GM12878 (cell line): ENCODE measurements at regions of chr1 and their contacts with region 1.

Region 1: DNA sequence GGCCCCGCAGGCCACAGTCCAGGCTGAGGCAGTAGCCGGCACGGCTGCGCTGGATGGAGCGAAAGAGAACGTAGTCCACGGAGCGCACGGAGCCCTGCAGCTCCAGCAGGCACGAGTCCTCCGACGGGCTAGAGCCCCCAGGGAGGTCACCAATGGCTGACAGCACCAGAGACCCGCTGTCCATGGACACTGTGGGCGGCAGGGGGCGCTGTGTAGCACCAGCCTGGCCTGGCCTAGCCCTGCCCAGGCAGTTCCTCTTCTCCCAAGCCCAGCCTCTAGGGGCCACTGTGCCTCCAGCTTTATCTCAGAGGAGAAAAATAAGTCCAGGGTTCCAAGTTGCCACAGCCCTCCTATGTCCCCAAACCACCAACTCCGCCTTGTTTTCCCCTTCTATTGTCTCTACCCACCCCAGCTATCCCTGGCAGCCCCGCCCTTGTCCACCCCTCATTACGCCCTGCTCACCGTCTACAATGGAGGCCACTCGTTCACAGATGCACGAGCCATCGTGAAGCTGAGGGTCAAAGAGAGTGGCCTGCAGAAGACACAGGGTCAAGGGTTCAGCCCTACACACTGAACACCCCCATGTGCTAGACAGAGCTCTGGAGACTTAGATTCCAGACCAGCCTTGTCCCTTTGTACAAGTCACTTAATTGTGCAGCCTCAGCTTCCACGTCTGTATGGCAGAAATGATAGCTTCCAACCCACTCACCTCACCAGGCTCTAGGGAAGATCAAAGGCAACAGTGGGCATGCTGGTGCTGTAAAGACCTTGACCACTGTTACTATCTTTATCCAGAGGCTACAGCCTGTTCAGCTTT is 4.4 kb downstream of the ENTREP3 start:
- DNase-seq: peak; percentile 57
- ATAC-seq: peak; percentile 97
- H3K4me3 ChIP-seq: peak overlapping the region; percentile 72
- H3K27ac ChIP-seq: peak overlapping the region; percentile 38
- H3K4me1 ChIP-seq: peaks cover 13% of the 10 kb centered on the region
- H3K27me3 ChIP-seq: no peaks in the 10 kb centered on the region
- CTCF ChIP-seq: peak; percentile 100; a peak in 5 of 6 replicates
- EP300 ChIP-seq: no peak
- POLR2A ChIP-seq: peak; percentile 65
- RAD21 ChIP-seq: peak; percentile 89

Region 2: DNA sequence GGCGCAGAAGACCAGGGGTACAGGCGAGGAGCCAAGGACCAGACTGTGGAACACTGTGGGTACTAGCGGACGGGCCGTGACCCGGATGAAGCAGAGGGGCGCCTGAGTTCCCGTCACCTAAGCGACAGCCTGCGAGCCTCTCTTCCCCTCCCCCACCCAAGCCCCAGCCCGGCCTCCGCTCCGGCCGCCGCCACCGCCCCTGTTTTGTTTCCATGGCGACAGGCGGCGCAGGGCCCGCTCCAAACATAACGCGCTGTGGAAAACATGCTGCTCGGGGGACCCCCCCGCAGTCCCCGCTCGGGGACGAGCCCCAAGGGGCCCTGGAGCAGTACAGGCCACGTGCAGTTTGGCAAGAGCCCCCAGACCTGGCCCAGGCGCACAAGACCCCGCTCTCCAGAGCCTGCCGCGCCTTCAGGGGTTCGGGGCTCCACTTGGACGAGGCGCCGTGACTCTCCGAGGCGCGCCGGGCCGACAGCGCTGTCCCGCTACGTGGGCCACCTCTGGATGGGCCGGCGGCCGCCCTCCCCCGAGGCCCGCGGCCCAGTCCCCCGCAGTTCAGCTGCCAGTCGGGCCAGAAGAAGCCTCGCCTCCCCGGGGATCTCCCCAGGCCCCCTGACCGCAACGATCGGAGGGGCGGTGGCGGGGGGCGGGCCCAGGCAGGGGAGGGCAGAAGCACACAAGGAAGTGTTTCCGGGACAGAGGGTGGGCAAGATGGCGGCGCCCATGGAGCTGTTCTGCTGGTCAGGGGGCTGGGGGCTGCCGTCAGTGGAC is 42.1 kb before region 1 on chr1 and contains the start of gene MTX1:
- CTCF ChIA-PET with region 1: interaction called, 28 read pairs
- POLR2A ChIA-PET with region 1: no interaction called
- RAD21 ChIA-PET with region 1: interaction called, 16 read pairs
- SMC1A ChIA-PET with region 1: interaction called, 15 read pairs
- in situ Hi-C with region 1: no loop called
- intact Hi-C with region 1: no loop called
- DNase-seq: no peak
- ATAC-seq: peak; percentile 93
- H3K4me3 ChIP-seq: peak within 1 kb of the TSS; percentile 98
- H3K27ac ChIP-seq: peak within 1 kb of the TSS; percentile 81
- H3K4me1 ChIP-seq: peaks cover 19% of the 10 kb centered on the region
- H3K27me3 ChIP-seq: no peaks in the 10 kb centered on the region
- CTCF ChIP-seq: no peak
- EP300 ChIP-seq: peak in 1 of 2 experiments; percentile 58; a peak in 1 of 4 replicates
- POLR2A ChIP-seq: peak; percentile 92
- RAD21 ChIP-seq: no peak
- polyA plus RNA-seq, gene MTX1: 15.8 to 25.5 TPM

Region 3: GRCh38 chr1:155267373-155267772 is 16.5 kb after region 1 on chr1:
- CTCF ChIA-PET with region 1: interaction called, 80 read pairs
- POLR2A ChIA-PET with region 1: interaction called, 7 read pairs
- RAD21 ChIA-PET with region 1: interaction called, 26 read pairs
- SMC1A ChIA-PET with region 1: interaction called, 17 read pairs
- in situ Hi-C with region 1: no loop called
- intact Hi-C with region 1: no loop called
- DNase-seq: no peak
- ATAC-seq: no peak
- H3K4me3 ChIP-seq: no peak overlapping the region
- H3K27ac ChIP-seq: no peak overlapping the region
- H3K4me1 ChIP-seq: no peaks in the 10 kb centered on the region; the same call in 1 of the 2 replicates
- H3K27me3 ChIP-seq: no peaks in the 10 kb centered on the region
- CTCF ChIP-seq: no peak
- EP300 ChIP-seq: no peak
- POLR2A ChIP-seq: no peak
- RAD21 ChIP-seq: no peak

Region 4: DNA sequence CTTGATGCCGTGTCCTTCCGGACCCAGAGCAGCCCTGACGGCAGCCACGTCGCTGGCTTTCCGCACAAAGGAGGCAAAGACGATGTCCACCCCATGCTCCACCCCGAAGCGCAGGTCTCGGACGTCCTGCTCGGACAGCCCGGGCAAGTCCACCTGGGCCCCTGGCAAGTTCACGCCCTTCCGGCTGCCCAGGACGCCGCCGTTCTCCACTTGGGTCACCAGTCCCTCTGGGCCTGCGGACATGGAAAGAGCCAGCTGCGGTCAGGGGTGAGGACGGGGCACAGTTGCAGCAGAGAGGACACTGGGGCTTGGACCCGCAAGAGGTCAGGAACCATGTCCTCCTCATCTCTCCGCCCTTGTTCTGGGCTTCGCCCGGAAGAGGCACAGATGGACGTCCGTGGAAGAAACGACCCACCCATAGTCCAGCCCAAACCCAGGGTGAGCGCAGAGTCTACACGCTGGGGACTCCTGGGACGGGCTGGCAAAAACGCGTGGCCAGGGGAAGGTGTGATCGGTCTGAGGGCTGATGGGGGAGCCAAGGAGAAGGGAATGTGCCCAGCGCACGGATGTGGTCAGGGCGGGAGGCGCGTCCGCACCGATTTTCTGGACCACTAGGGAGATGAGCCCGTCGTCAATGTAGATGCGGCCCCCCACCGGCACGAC is 43.8 kb after region 1 on chr1:
- CTCF ChIA-PET with region 1: no interaction called
- POLR2A ChIA-PET with region 1: no interaction called
- RAD21 ChIA-PET with region 1: no interaction called
- SMC1A ChIA-PET with region 1: no interaction called
- in situ Hi-C with region 1: no loop called
- intact Hi-C with region 1: no loop called
- DNase-seq: no peak
- ATAC-seq: no peak
- H3K4me3 ChIP-seq: no peak overlapping the region
- H3K27ac ChIP-seq: no peak overlapping the region
- H3K4me1 ChIP-seq: peaks cover 3% of the 10 kb centered on the region; the same call in 1 of the 2 replicates
- H3K27me3 ChIP-seq: no peaks in the 10 kb centered on the region; a peak in 1 of 4 replicates
- CTCF ChIP-seq: no peak
- EP300 ChIP-seq: no peak
- POLR2A ChIP-seq: no peak
- RAD21 ChIP-seq: no peak

Region 5: DNA sequence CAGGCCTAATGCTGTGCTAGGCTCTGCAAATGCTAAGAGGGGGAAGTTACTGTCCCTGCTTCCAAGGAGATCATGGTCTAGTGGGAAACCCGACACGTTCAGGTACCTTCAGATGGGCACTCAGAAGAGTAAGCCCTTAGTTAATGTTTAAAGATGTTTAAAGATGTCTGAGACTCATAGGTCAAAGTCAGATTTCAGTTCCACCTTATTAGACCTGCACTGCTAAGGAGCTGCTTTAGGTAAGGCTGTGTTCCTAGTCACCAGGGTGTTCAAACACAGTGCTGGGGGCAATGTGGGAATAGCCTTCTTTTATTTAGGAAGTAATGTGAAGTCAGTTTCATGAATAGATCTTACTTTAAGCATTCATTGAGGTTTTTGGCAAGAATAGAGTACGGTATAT is 66.1 kb after region 1 on chr1:
- CTCF ChIA-PET with region 1: interaction called, 225 read pairs
- POLR2A ChIA-PET with region 1: interaction called, 23 read pairs
- RAD21 ChIA-PET with region 1: interaction called, 81 read pairs
- SMC1A ChIA-PET with region 1: interaction called, 57 read pairs
- in situ Hi-C with region 1: no loop called
- intact Hi-C with region 1: no loop called
- DNase-seq: no peak
- ATAC-seq: no peak
- H3K4me3 ChIP-seq: no peak overlapping the region
- H3K27ac ChIP-seq: no peak overlapping the region
- H3K4me1 ChIP-seq: peaks cover under 1% of the 10 kb centered on the region; the same call in 1 of the 2 replicates
- H3K27me3 ChIP-seq: no peaks in the 10 kb centered on the region
- CTCF ChIP-seq: no peak
- EP300 ChIP-seq: no peak
- POLR2A ChIP-seq: no peak
- RAD21 ChIP-seq: no peak

Region 6: DNA sequence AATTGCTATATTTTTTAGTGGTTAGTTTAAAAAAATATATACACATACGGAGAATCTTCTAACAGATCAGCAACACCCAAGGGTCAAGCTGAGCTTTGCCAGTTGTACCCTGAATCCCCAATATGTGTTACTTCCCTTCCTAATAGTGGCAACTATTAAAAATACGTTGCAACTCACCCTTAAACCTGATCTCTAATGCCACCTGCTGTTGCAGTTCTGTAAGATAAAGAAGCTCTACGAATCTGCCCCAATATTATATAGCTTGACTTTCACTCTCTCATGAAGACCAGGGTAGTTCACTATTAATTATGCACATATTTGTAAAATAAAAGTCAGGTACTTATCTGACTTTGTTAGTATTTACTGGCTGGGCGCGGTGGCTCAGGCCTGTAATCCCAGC is 253.4 kb after region 1 on chr1:
- CTCF ChIA-PET with region 1: interaction called, 48 read pairs
- POLR2A ChIA-PET with region 1: interaction called, 5 read pairs
- RAD21 ChIA-PET with region 1: interaction called, 33 read pairs
- SMC1A ChIA-PET with region 1: interaction called, 5 read pairs
- in situ Hi-C with region 1: no loop called
- intact Hi-C with region 1: loop called (anchors 2 kb)
- DNase-seq: no peak
- ATAC-seq: peak; percentile 80
- H3K4me3 ChIP-seq: no peak overlapping the region
- H3K27ac ChIP-seq: peak overlapping the region; percentile 38; the same call in 1 of the 2 replicates
- H3K4me1 ChIP-seq: peaks cover 27% of the 10 kb centered on the region
- H3K27me3 ChIP-seq: no peaks in the 10 kb centered on the region
- CTCF ChIP-seq: peak; percentile 38 to 62 (median 52); a peak in 5 of 6 replicates
- EP300 ChIP-seq: no peak
- POLR2A ChIP-seq: no peak
- RAD21 ChIP-seq: peak; percentile 72

Region 7: DNA sequence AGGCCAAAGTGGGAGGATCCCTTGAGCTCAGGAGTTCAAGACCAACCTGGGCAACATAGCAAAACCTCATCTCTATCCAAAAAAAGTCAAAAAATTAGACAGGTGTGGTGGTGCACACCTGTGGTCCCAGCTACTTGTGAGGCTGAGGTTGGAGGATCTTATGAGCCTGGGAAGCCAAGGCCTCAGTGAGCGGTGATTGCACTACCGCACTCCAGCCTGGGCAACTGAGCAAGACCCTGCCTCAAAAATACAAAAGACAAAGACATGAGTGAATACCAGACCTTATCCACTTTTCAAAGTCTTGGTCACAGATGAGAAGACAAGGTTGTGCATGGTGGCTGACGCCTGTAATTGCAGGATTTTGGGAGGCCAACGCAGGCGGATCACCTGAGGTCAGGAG is 346.0 kb after region 1 on chr1:
- CTCF ChIA-PET with region 1: interaction called, 18 read pairs
- POLR2A ChIA-PET with region 1: no interaction called
- RAD21 ChIA-PET with region 1: no interaction called
- SMC1A ChIA-PET with region 1: interaction called, 13 read pairs
- in situ Hi-C with region 1: loop called (anchors 5 kb)
- intact Hi-C with region 1: loop called (anchors 2 kb)
- DNase-seq: no peak
- ATAC-seq: no peak
- H3K4me3 ChIP-seq: no peak overlapping the region
- H3K27ac ChIP-seq: no peak overlapping the region
- H3K4me1 ChIP-seq: no peaks in the 10 kb centered on the region
- H3K27me3 ChIP-seq: no peaks in the 10 kb centered on the region
- CTCF ChIP-seq: no peak
- EP300 ChIP-seq: no peak
- POLR2A ChIP-seq: no peak
- RAD21 ChIP-seq: no peak